ENCODE measurements at regions of chr17 and their contacts with region 1.

Region 1: GRCh38 chr17:75364078-75364477 is 41.4 kb downstream of the GRB2 start:
- DNase-seq: no peak
- H3K4me3 ChIP-seq: peak overlapping the region; percentile 44
- H3K27ac ChIP-seq: peak overlapping the region; percentile 64
- H3K4me1 ChIP-seq: peaks cover 97% of the 10 kb centered on the region
- CTCF ChIP-seq: no peak

Region 2: GRCh38 chr17:75131280-75132017 is 232.6 kb before region 1 on chr17 and contains the start of gene NT5C:
- CTCF ChIA-PET with region 1: no interaction called
- POLR2A ChIA-PET with region 1: no interaction called
- intact Hi-C with region 1: no loop called
- DNase-seq: peak; percentile 95
- H3K4me3 ChIP-seq: peak within 1 kb of the TSS; percentile 89
- H3K27ac ChIP-seq: peak within 1 kb of the TSS; percentile 69
- H3K4me1 ChIP-seq: peaks cover 28% of the 10 kb centered on the region
- CTCF ChIP-seq: peak; percentile 90
- total RNA-seq, gene NT5C: 229 and 259 TPM in 2 replicates

Region 3: GRCh38 chr17:75238684-75239191 is 125.3 kb before region 1 on chr17:
- CTCF ChIA-PET with region 1: no interaction called
- POLR2A ChIA-PET with region 1: interaction called, 11 read pairs
- intact Hi-C with region 1: no loop called
- DNase-seq: peak; percentile 89
- H3K4me3 ChIP-seq: no peak overlapping the region
- H3K27ac ChIP-seq: peak overlapping the region; percentile 15
- H3K4me1 ChIP-seq: peaks cover 27% of the 10 kb centered on the region
- CTCF ChIP-seq: peak; percentile 99

Region 4: DNA sequence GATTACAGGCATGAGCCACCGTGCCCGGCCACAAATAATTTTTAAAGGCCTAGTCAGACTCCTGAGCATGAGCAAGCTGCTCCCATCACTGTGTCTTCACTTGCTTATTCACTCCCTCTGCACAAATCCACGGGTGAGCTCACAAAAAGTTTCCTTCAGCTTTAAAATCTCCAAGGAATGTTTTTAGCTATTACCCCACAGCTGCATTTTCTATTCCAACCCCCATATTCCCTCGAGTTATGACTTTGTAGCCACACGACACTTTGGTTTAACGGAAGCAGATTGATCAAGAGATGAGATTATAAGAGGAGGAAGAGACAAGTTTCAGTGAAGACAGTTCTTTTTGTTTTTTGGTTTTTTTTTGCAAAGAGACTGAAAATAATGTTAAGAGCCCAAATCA is 25.7 kb before region 1 on chr17:
- CTCF ChIA-PET with region 1: no interaction called
- POLR2A ChIA-PET with region 1: interaction called, 29 read pairs
- intact Hi-C with region 1: no loop called
- DNase-seq: no peak
- H3K4me3 ChIP-seq: peak overlapping the region; percentile 36
- H3K27ac ChIP-seq: peak overlapping the region; percentile 94
- H3K4me1 ChIP-seq: peaks cover 89% of the 10 kb centered on the region
- CTCF ChIP-seq: no peak

Region 5: DNA sequence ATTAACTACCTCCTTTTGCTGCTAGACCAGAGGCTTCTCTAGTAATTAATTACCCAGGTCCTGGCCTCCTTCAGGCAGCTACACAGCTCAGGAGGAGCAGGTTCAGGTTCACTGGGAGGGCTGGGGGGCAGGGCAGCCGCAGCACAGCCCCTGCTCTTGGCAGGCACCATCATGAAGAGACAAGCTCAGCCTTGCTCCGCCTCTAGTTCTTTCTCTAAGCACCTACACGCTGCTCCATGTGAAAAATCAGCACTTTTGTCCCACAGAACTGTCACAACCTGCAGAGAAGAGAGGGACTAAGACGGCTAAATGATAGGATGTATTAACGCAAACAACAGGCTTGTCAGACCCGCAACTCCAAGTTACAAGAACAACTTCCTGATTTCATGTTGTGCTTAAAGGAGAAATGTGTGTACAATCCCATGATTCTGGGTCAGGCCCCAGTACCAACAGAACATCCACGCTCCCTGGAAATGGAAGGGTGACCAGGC is 12.0 kb before region 1 on chr17:
- CTCF ChIA-PET with region 1: no interaction called
- POLR2A ChIA-PET with region 1: interaction called, 58 read pairs
- intact Hi-C with region 1: loop called (anchors 1 kb)
- DNase-seq: peak; percentile 68
- H3K4me3 ChIP-seq: peak overlapping the region; percentile 43
- H3K27ac ChIP-seq: peak overlapping the region; percentile 94
- H3K4me1 ChIP-seq: peaks cover 63% of the 10 kb centered on the region
- CTCF ChIP-seq: no peak

Region 6: GRCh38 chr17:75380315-75380714 is 16.2 kb after region 1 on chr17:
- CTCF ChIA-PET with region 1: interaction called, 5 read pairs
- POLR2A ChIA-PET with region 1: interaction called, 20 read pairs
- intact Hi-C with region 1: no loop called
- DNase-seq: no peak
- H3K4me3 ChIP-seq: no peak overlapping the region
- H3K27ac ChIP-seq: no peak overlapping the region
- H3K4me1 ChIP-seq: peaks cover 69% of the 10 kb centered on the region
- CTCF ChIP-seq: no peak

Region 7: DNA sequence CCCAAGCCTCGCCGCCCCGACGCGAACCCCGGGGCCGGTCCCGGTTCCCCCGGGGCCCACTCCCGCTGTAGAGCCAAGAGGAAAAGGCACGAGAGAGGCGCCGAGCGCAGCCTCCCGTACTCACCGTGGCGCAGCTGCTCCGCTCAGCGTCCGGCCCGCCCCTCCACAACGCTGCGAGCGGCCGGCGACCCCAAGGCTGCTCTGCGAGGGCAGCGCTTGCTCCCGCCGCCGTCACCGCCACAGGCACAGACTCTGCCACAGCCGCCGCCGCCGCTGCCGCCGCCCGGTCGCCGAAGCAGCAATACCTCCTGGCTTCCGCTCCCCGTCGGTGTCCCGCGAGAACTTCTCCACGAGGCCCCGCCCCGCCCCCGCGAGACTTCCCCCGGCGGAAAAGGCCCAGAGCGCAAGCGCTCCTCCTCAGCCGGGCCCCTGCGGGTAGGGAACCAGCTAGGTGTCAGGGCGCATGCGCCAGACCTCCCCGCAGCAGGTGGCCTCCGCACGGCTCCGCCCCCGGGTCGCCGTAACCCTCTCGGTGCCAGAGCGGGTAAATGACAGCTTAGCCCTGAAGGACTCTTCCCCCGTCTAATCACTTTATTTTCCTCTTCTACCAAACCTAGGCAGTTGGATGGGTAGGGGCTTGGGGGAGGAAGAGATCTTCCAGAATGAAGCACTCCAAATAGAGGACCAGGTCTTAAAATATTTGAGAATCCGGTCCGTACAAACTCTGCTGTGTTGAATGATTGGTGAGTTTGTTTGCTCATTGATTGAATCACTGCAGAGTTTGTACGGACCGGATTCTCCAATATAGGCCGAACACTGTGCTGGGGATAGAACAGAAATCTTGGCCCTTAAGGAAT is 41.5 kb after region 1 on chr17 and contains the start of gene GRB2:
- CTCF ChIA-PET with region 1: no interaction called
- POLR2A ChIA-PET with region 1: interaction called, 7 read pairs
- intact Hi-C with region 1: loop called (anchors 5 kb)
- DNase-seq: peak; percentile 100
- H3K4me3 ChIP-seq: peak within 1 kb of the TSS; percentile 84
- H3K27ac ChIP-seq: peak within 1 kb of the TSS; percentile 81
- H3K4me1 ChIP-seq: peaks cover 62% of the 10 kb centered on the region
- CTCF ChIP-seq: no peak
- total RNA-seq, gene GRB2: 240 and 244 TPM in 2 replicates

Measured in OCI-LY7 (cell line).